IMR-90 (cell line): ENCODE measurements at regions of chr2 and their contacts with region 1.

Region 1: GRCh38 chr2:186695081-186695756 is 1.4 kb downstream of the FAM171B start:
- DNase-seq: peak; percentile 76
- ATAC-seq: peak; percentile 50
- H3K4me3 ChIP-seq: peak overlapping the region; percentile 65
- H3K27ac ChIP-seq: peak overlapping the region; percentile 44; the same call in 1 of the 2 replicates
- H3K4me1 ChIP-seq: no peaks in the 10 kb centered on the region
- H3K27me3 ChIP-seq: no peaks in the 10 kb centered on the region
- CTCF ChIP-seq: no peak
- POLR2A ChIP-seq: no peak
- RAD21 ChIP-seq: no peak

Region 2: GRCh38 chr2:186308347-186308746 is 386.9 kb before region 1 on chr2:
- CTCF ChIA-PET with region 1: no interaction called
- POLR2A ChIA-PET with region 1: no interaction called
- dilution Hi-C with region 1: no loop called
- in situ Hi-C with region 1: no loop called
- intact Hi-C with region 1: no loop called
- DNase-seq: peak; percentile 18
- ATAC-seq: no peak; the same call in 1 of the 2 replicates
- H3K4me3 ChIP-seq: no peak overlapping the region
- H3K27ac ChIP-seq: no peak overlapping the region
- H3K4me1 ChIP-seq: no peaks in the 10 kb centered on the region
- H3K27me3 ChIP-seq: no peaks in the 10 kb centered on the region
- CTCF ChIP-seq: no peak
- POLR2A ChIP-seq: no peak
- RAD21 ChIP-seq: no peak

Region 3: GRCh38 chr2:186683341-186683740 is 11.9 kb before region 1 on chr2:
- CTCF ChIA-PET with region 1: no interaction called
- POLR2A ChIA-PET with region 1: interaction called, 11 read pairs
- dilution Hi-C with region 1: no loop called
- in situ Hi-C with region 1: no loop called
- intact Hi-C with region 1: no loop called
- DNase-seq: peak; percentile 26
- ATAC-seq: no peak; the same call in 1 of the 2 replicates
- H3K4me3 ChIP-seq: no peak overlapping the region
- H3K27ac ChIP-seq: no peak overlapping the region
- H3K4me1 ChIP-seq: peaks cover 2% of the 10 kb centered on the region
- H3K27me3 ChIP-seq: no peaks in the 10 kb centered on the region
- CTCF ChIP-seq: no peak
- POLR2A ChIP-seq: no peak
- RAD21 ChIP-seq: no peak

Region 4: DNA sequence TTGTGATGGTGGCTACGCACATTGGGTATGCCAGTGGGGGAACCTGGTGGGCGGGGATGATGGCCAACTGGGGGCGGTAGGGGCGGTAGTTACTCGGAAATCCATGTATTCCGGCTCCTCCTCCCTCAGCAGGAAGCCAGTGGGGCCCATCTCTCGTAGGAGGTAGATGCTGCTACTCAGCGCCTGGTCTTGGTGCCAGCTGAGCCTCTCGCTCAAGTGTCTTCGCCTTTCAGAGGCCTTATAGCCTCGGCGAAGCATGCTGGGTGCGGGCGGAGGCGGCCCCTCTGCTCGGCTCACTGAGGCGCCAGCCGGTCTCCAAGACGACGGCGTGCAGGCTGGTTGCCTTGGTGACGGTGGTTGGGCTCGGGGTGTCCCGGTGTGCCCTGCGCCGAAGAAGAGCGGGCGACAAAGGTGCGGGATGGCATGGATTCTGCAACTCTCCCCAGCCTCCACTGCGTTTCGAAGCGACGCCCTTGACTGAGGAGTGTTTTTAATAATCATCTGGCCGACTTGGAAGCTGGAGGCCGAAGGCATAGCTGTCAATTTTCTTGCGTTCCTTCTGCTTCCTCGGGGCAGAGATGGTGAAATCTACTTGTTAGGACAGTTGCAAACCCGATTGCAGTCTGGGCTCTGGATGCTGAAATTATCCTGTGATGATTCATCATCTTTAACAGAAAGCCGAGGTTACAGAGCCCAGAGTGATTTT is 153.8 kb after region 1 on chr2 and contains the start of gene ZSWIM2:
- CTCF ChIA-PET with region 1: no interaction called
- POLR2A ChIA-PET with region 1: no interaction called
- dilution Hi-C with region 1: no loop called
- in situ Hi-C with region 1: no loop called
- intact Hi-C with region 1: loop called (anchors 2 kb)
- DNase-seq: peak; percentile 88
- ATAC-seq: peak; percentile 88
- H3K4me3 ChIP-seq: peak within 1 kb of the TSS; percentile 69
- H3K27ac ChIP-seq: peak within 1 kb of the TSS; percentile 65
- H3K4me1 ChIP-seq: peaks cover 3% of the 10 kb centered on the region; the same call in 1 of the 2 replicates
- H3K27me3 ChIP-seq: no peaks in the 10 kb centered on the region
- CTCF ChIP-seq: no peak
- POLR2A ChIP-seq: 0 out of 2 replicates have a peak, but pooled peaks have one; percentile 53
- RAD21 ChIP-seq: no peak
- total RNA-seq, gene ZSWIM2: 0.28 TPM in 1 of 2 replicates, not detected in the other

Region 5: DNA sequence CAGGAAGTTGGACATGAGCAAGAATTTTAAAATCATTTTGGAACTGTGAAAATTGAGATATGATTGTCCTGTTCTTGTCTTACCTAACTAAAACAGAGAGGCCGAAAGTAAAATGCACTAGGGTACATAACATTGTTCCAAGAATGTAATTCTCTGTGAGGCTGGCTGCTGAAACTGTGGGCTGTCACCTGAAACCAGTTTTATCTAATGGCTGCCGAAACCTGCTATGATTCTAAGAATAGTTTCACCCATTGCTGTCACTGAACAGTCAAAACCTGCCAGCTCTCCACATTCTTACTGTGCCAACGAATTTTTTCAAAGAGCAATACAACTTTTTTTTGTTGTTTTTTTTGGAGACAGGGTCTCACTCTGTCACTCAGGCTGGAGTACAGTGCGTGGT is 273.1 kb after region 1 on chr2:
- CTCF ChIA-PET with region 1: no interaction called
- POLR2A ChIA-PET with region 1: no interaction called
- dilution Hi-C with region 1: no loop called
- in situ Hi-C with region 1: no loop called
- intact Hi-C with region 1: no loop called
- DNase-seq: no peak
- ATAC-seq: no peak
- H3K4me3 ChIP-seq: no peak overlapping the region
- H3K27ac ChIP-seq: no peak overlapping the region
- H3K4me1 ChIP-seq: no peaks in the 10 kb centered on the region
- H3K27me3 ChIP-seq: no peaks in the 10 kb centered on the region
- CTCF ChIP-seq: no peak
- POLR2A ChIP-seq: no peak
- RAD21 ChIP-seq: no peak